ENCODE measurements at regions of chr10 and their contacts with region 1.

Region 1: GRCh38 chr10:63629363-63630084 is 108.3 kb downstream of the REEP3 start:
- DNase-seq: peak; percentile 100
- H3K4me3 ChIP-seq: peak overlapping the region; percentile 49 to 65 (median 57)
- H3K27ac ChIP-seq: peak overlapping the region; percentile 95 to 98 (median 98)
- H3K4me1 ChIP-seq: peaks cover 0 to 33% (median 28%) of the 10 kb centered on the region in 4 donors
- H3K27me3 ChIP-seq: no peaks in the 10 kb centered on the region
- CTCF ChIP-seq: peak; percentile 35 to 61 (median 50)
- EP300 ChIP-seq: peak; percentile 71 to 92 (median 85)
- POLR2A ChIP-seq: no peak

Region 2: DNA sequence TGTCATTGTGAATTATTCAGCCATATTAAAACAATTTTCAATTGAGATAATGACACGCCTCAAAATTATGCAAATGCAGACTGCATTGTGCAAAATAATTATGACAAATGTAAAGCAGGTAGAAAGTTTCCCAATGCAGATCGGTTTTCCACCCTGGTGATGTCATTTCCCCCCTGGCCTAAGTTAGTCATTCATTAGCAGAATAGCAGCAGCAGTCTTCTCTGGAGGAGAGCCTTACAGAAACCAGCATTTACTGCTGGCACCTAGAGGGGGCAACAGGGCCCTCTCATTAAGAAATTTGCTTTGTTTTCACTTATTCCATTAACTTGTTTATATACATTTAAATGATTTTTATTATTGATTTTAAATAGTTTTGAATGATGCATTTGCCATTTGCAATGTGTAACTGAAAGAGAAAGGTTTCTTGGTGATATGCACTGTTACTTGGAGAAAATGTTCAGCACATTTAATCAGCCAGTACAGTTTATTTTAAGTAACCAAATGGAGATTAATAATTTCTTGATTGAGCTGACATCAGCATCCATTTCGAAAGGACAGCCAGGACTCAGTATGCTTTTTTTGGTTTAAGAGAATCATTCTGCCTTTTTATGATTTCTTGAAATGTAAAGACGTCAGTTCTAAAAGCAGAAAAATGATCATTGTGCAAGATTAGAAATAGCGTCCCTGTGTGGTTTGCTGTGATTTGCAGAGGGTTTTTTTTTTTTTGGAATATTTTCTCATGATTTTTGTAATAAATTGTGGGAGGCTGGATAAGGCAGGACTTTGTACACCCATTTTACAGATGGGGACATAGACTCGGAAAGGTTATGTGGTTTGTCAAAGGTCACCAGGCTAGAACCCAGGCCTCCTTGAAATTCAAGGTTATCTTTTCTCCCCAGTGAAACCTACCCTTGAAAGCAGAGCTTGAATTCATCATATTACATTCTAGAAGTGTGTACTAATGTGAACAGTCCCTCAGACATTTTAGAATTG is 1724.5 kb before region 1 on chr10:
- intact Hi-C with region 1: no loop called
- DNase-seq: no peak
- H3K4me3 ChIP-seq: peak overlapping the region in 2 of 4 donors; percentile 67 to 70
- H3K27ac ChIP-seq: peak overlapping the region; percentile 93 to 98 (median 96)
- H3K4me1 ChIP-seq: peaks cover 0 to 21% (median 6%) of the 10 kb centered on the region in 4 donors
- H3K27me3 ChIP-seq: no peaks in the 10 kb centered on the region
- CTCF ChIP-seq: no peak
- EP300 ChIP-seq: peak in 1 of 4 donors; percentile 39
- POLR2A ChIP-seq: no peak

Region 3: DNA sequence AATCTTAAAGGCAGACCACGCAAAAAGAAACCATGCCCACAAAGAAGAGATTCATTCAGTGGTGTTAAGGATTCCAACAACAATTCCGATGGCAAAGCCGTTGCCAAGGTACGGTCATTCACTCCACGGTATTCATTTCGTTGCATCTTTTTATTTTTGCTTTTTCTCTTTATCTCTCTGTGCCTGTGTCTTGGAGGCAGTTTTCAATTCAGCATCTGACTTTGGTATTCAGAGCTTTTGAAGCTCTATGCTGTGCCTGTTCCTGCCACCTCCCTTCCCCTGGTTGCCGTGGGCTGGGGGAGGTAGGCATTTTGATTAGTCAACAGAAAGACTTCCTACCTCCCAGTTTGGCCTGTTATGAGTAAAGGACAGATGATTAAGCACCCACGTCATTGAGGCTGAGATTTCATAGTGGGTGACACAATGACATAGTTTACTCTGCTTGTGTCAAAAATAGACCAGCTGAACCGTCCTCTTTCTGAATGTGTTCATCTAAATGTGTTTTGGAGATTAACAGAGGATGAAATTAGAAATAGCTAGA is 1578.6 kb before region 1 on chr10:
- intact Hi-C with region 1: loop called (anchors 10 kb)
- DNase-seq: no peak
- H3K4me3 ChIP-seq: peak overlapping the region; percentile 53 to 65 (median 58)
- H3K27ac ChIP-seq: peak overlapping the region; percentile 89 to 95 (median 93)
- H3K4me1 ChIP-seq: peaks cover 0 to 78% (median 75%) of the 10 kb centered on the region in 4 donors
- H3K27me3 ChIP-seq: no peaks in the 10 kb centered on the region
- CTCF ChIP-seq: no peak
- EP300 ChIP-seq: peak in 3 of 4 donors; percentile 17 to 53 (median 23)
- POLR2A ChIP-seq: no peak

Region 4: DNA sequence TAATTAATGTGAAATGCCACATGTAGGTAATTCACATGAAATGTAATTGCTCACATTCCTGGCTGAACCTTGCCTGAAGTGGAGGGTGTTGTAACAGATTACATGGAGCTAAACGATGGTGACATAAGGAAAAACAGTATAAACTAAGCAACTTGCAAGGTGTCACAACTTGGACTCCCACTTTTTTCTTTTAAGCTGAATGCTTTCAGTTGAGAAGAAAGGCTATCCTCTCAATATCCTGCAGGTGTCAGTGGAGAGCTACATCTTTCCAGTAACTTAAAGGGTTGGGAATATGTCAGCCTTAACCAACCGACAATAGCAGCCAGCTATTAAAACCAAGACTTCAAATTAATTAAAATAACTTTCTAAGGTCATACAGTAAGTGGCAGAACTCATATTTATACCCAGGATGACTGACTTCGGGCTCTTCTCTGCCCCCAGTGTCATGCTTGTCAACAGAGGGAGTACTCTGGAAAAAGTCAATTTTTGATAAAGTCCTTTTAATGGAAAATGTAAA is 462.7 kb before region 1 on chr10:
- intact Hi-C with region 1: loop called (anchors 2 kb)
- DNase-seq: no peak
- H3K4me3 ChIP-seq: no peak overlapping the region
- H3K27ac ChIP-seq: peak overlapping the region in 2 of 4 donors; percentile 39 to 60
- H3K4me1 ChIP-seq: peaks cover 0 to 41% (median 27%) of the 10 kb centered on the region in 4 donors
- H3K27me3 ChIP-seq: no peaks in the 10 kb centered on the region
- CTCF ChIP-seq: peak; percentile 71 to 89 (median 78)
- EP300 ChIP-seq: no peak
- POLR2A ChIP-seq: no peak

Region 5: DNA sequence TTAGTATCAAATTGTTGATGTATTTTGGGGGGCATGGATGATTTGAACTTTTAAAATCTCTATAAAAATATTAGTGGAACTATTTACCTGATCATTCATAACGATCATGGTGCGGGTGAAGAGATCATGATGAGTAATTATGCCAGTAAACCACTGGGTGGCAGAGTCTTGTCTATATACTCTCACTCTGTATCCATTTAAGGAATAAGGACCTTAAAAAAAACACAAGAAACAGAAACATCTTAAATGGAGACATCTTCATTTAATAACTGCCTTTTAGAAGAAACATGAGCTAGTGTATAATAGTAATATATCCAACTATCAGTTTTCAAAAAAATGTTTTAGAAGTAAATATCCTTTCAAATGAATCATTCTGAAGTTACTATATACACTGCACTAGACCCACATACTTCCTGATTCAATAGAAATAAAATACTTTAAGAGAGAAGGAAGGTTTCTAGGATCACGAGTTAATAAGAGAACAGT is 412.4 kb before region 1 on chr10:
- intact Hi-C with region 1: loop called (anchors 5 kb)
- DNase-seq: no peak
- H3K4me3 ChIP-seq: no peak overlapping the region
- H3K27ac ChIP-seq: peak overlapping the region in 3 of 4 donors; percentile 12 to 56 (median 56)
- H3K4me1 ChIP-seq: peaks cover 0 to 30% (median 13%) of the 10 kb centered on the region in 4 donors
- H3K27me3 ChIP-seq: no peaks in the 10 kb centered on the region
- CTCF ChIP-seq: peak; percentile 35 to 76 (median 68)
- EP300 ChIP-seq: no peak
- POLR2A ChIP-seq: no peak

Region 6: DNA sequence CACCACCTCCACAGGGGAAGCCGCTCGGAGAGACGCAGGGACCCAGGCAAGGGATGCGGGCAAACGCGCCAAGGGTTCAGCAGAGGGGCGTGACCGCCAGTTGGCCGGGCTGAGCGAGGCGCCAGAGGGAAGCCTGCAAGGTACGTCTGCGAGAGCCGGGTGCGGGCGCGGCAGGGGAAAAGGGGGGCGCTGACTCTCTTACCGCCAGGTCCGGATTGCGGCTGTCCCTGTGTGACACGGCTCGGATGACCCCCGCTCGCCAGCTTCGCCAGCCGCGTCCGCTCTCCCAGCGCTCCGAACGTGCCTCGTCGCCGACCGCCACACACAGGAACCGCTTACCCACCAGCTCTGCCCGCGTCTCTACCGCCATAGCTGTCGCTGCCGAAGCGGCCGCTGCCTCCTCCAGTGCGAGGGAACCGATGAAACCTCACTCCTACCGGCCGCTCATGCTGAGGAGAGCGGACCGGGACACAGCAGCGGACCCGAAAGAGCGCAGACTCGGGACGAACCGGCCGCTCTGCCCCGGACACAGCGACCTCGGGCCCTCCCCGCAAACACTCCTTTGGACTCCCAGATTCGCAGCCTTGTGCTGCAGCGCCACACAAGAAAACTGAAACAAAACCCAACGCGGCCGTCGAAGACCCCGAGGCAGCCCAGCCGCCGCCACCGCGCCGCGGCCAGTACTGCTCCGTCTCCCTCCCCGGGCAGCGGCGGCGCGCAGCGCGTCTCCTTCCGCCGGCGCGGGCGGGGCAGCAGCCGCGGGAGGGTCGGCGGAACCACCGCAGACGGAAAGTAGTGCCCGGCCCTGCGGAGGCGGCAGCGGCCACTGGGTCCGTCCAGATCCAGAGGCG is 164.0 kb before region 1 on chr10 and contains the start of gene JMJD1C:
- intact Hi-C with region 1: loop called (anchors 2 kb)
- DNase-seq: peak; percentile 88
- H3K4me3 ChIP-seq: peak within 1 kb of the TSS; percentile 54 to 86 (median 76)
- H3K27ac ChIP-seq: peak within 1 kb of the TSS; percentile 89 to 96 (median 92)
- H3K4me1 ChIP-seq: peaks cover 0 to 23% (median 19%) of the 10 kb centered on the region in 4 donors
- H3K27me3 ChIP-seq: no peaks in the 10 kb centered on the region
- CTCF ChIP-seq: no peak
- EP300 ChIP-seq: no peak
- POLR2A ChIP-seq: peak; percentile 22 to 25
- total RNA-seq, gene JMJD1C: 94.2 to 134 (median 121) TPM

Region 7: DNA sequence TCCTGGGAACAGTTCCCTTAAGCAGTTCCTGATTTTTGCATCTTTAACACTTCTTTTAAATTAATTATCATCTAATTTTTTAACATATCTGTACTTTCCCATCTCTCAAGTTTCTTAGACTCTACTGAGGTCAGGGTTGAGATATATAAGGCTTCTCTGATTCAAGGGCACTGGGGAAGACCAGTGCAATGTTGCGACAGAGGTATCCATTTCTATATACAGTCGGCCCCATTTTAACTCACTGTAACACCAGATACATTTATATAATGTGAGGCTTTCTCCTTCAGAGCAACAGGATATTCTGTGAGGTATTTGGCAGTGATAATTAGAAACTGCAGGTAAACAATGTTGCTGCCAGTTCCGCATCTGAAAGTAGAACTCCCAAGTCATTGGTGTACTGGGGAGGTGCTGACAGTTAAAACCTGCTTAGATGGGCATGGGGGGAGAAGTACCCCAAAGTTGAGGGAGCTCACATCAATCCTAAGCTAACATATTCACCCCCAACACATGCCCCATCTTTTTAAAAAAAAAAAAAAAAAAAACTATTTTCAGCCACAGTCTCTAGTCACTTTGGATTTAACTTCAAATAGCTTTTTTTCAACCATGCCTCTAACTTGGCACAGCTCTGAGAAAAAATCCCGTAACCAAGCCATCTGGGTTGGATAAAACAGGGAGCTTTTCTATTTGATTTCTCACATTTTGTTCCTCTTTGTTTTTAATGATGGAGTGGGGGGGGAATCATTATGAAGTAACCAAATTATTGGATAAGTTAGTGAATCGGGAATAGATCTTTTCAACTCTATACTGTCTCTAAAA is 45.4 kb before region 1 on chr10:
- intact Hi-C with region 1: loop called (anchors 5 kb)
- DNase-seq: no peak
- H3K4me3 ChIP-seq: no peak overlapping the region
- H3K27ac ChIP-seq: peak overlapping the region in 1 of 4 donors; percentile 42
- H3K4me1 ChIP-seq: peaks cover 0 to 71% (median 39%) of the 10 kb centered on the region in 4 donors
- H3K27me3 ChIP-seq: no peaks in the 10 kb centered on the region
- CTCF ChIP-seq: no peak
- EP300 ChIP-seq: no peak
- POLR2A ChIP-seq: no peak

Region 8: GRCh38 chr10:63681993-63682697 is 52.6 kb after region 1 on chr10:
- intact Hi-C with region 1: no loop called
- DNase-seq: no peak
- H3K4me3 ChIP-seq: no peak overlapping the region
- H3K27ac ChIP-seq: peak overlapping the region in 3 of 4 donors; percentile 24 to 44 (median 29)
- H3K4me1 ChIP-seq: peaks cover 0 to 13% (median 0%) of the 10 kb centered on the region in 4 donors
- H3K27me3 ChIP-seq: no peaks in the 10 kb centered on the region
- CTCF ChIP-seq: no peak
- EP300 ChIP-seq: peak in 1 of 4 donors; percentile 30
- POLR2A ChIP-seq: no peak

Measured in sigmoid colon (tissue), 7 donors.